ENCODE measurements at regions of chr1 and their contacts with region 1.

Region 1: DNA sequence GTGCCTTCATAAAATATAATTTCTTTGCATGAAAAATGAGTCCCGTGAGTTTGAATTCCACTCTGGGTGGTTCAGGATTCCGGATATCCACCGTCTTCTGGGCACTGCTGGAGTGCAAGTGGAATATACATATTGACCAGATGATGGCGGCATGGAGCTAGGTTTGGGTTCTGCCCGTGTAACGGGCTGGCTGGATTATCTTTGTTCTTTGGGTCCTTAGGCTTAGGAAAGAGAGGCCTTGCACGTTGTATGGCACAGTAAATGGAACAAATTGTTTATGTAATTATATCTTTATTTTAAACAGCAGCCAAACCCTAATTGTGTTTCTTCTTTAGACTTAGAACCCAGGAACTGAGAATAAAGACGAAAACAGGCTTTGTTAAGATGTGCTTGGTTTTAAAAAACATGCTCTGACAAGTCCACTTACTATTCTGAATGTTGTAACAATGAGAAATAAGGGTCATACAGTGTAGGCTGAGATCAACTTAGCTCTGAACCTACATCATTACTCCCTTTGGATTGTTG is 13.5 kb upstream of the ACBD6 start:
- DNase-seq: peak; percentile 95
- H3K4me3 Mint-ChIP-seq: no peak overlapping the region
- H3K27ac Mint-ChIP-seq: peak overlapping the region; percentile 91
- H3K4me1 Mint-ChIP-seq: peaks cover 7% of the 10 kb centered on the region
- H3K27me3 Mint-ChIP-seq: no peaks in the 10 kb centered on the region
- CTCF ChIP-seq: peak; percentile 98

Region 2: GRCh38 chr1:180527101-180527669 is 11.3 kb after region 1 on chr1:
- CTCF ChIA-PET with region 1: interaction called, 77 read pairs
- POLR2A ChIA-PET with region 1: interaction called, 56 read pairs
- intact Hi-C with region 1: loop called (anchors 2 kb)
- DNase-seq: peak; percentile 82
- H3K4me3 Mint-ChIP-seq: no peak overlapping the region
- H3K27ac Mint-ChIP-seq: peak overlapping the region; percentile 92
- H3K4me1 Mint-ChIP-seq: peaks cover 81% of the 10 kb centered on the region
- H3K27me3 Mint-ChIP-seq: no peaks in the 10 kb centered on the region
- CTCF ChIP-seq: no peak

Region 3: DNA sequence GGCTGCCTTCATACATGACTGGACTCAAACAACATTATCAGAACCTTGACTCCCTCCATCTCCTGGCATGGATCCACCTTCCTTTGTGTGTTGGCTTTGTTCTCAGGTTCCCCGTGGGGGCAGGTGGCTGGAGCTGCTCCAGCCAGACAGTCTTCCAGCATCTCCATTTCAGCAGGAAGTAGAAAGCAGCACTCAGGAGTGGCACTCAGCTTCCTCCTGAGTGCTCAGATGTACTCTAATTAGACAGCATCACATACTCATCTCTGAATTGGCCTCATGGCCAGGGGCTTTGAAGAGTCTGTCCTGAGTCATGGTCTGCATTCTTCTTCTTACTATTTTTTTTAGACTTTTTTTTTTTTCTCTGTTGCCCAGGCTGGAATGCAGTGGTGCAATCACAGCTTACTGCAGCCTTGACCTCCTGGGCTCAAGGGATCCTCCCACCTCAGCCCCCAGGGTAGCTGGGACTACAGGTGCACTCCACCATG is 70.8 kb after region 1 on chr1:
- CTCF ChIA-PET with region 1: interaction called, 6 read pairs
- POLR2A ChIA-PET with region 1: interaction called, 27 read pairs
- intact Hi-C with region 1: no loop called
- DNase-seq: peak; percentile 93
- H3K4me3 Mint-ChIP-seq: no peak overlapping the region
- H3K27ac Mint-ChIP-seq: peak overlapping the region; percentile 99
- H3K4me1 Mint-ChIP-seq: peaks cover 34% of the 10 kb centered on the region
- H3K27me3 Mint-ChIP-seq: no peaks in the 10 kb centered on the region
- CTCF ChIP-seq: no peak

Region 4: GRCh38 chr1:180851995-180852887 is 336.3 kb after region 1 on chr1:
- CTCF ChIA-PET with region 1: interaction called, 17 read pairs
- POLR2A ChIA-PET with region 1: interaction called, 6 read pairs
- intact Hi-C with region 1: no loop called
- DNase-seq: no peak
- H3K4me3 Mint-ChIP-seq: no peak overlapping the region
- H3K27ac Mint-ChIP-seq: no peak overlapping the region
- H3K4me1 Mint-ChIP-seq: peaks cover 13% of the 10 kb centered on the region
- H3K27me3 Mint-ChIP-seq: no peaks in the 10 kb centered on the region
- CTCF ChIP-seq: no peak